RWPE1 (cell line): ENCODE measurements at regions of chr10 and their contacts with region 1.

Region 1: GRCh38 chr10:73886085-73886529 is 11.8 kb upstream of the CAMK2G start:
- DNase-seq: peak; percentile 85
- H3K27ac ChIP-seq: peak overlapping the region; percentile 99
- CTCF ChIP-seq: peak; percentile 82

Region 2: GRCh38 chr10:73439605-73440312 is 446.3 kb before region 1 on chr10:
- CTCF ChIA-PET with region 1: no interaction called
- POLR2A ChIA-PET with region 1: no interaction called
- DNase-seq: peak; percentile 42
- H3K27ac ChIP-seq: no peak overlapping the region
- CTCF ChIP-seq: no peak

Region 3: DNA sequence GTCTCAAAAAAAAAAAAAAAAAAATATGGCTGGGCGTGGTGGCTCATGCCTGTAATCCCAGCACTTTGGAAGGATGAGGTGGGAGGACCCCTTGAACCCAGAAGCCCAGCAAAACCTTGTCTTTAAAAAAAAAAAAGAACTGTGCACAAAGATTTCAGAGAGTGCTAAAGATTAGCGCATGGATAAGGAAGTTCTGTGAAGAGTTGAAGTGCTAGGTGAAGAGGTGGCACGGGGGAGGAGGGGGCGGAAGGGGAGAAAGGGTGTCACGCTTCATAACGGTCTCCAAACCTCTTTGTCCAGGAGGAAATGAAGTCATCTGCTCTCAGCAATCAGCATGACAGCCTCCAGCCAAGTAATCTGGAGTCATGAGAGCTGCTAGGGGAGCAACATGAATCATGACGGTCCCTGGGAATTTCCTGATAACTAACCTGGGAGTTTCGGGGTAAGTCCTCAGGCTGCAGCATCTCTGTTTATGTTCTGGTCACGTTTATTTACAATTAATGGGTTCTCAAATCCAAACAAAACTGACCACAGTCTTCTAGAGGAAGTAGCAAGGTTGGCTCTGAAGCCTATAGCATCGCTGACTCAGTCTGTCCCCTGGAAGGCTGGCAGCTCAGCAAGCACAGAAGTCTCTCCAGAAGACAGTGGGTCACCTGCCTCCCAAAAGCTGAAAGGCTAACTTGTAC is 22.9 kb after region 1 on chr10:
- CTCF ChIA-PET with region 1: interaction called, 29 read pairs
- POLR2A ChIA-PET with region 1: interaction called, 28 read pairs
- DNase-seq: peak; percentile 85
- H3K27ac ChIP-seq: peak overlapping the region; percentile 97
- CTCF ChIP-seq: no peak

Region 4: GRCh38 chr10:73916761-73917470 is 30.8 kb after region 1 on chr10:
- CTCF ChIA-PET with region 1: interaction called, 29 read pairs
- POLR2A ChIA-PET with region 1: interaction called, 28 read pairs
- DNase-seq: no peak
- H3K27ac ChIP-seq: peak overlapping the region; percentile 89
- CTCF ChIP-seq: no peak

Region 5: DNA sequence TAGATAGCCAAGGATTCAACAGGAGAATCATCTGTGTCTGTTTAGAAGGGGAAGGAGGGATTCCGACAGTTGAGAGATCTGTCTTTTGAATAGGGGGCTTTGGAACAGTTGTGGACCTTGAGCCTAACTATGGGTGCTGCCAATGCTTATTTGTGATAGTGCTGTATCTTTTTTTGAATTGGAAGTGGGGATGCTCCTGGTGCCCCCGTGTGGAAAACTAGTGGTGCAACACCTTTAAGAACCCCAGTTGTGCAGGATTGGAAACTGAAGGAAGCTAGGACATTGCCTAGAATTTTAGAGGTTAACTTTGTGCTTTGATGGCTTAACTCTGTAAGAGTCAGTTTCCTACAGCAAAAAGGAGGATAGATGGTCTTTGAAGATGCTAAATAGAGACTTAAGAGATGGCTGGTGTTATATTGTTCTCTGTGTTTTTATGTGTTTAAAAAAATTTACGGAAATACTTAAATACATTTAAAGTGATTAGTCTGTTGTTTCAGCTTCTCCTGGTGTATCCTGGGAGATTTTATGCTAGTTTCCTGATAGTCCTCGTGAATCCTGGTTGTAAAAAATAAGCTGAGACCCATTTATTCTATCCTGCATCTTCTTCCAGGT is 195.2 kb after region 1 on chr10:
- CTCF ChIA-PET with region 1: interaction called, 15 read pairs
- POLR2A ChIA-PET with region 1: no interaction called
- DNase-seq: peak; percentile 84
- H3K27ac ChIP-seq: no peak overlapping the region
- CTCF ChIP-seq: peak; percentile 89